ENCODE measurements at regions of chr19 and their contacts with region 1.

Region 1: GRCh38 chr19:11482384-11483050 is 1.7 kb upstream of the ELAVL3 start:
- DNase-seq: peak; percentile 80 to 89 (median 85)
- H3K4me3 ChIP-seq: peak overlapping the region; percentile 39
- H3K4me3 Mint-ChIP-seq: peak overlapping the region; percentile 38 to 79 (median 61)
- H3K27ac ChIP-seq: no peak overlapping the region
- H3K27ac Mint-ChIP-seq: peak overlapping the region in 4 of 8 donors; percentile 34 to 52 (median 48)
- H3K4me1 ChIP-seq: peaks cover 23% of the 10 kb centered on the region
- H3K4me1 Mint-ChIP-seq: peaks cover 19 to 26% (median 25%) of the 10 kb centered on the region in 3 donors
- H3K27me3 ChIP-seq: peaks cover 15% of the 10 kb centered on the region
- H3K27me3 Mint-ChIP-seq: peaks cover 26 to 28% of the 10 kb centered on the region in 2 donors

Region 2: DNA sequence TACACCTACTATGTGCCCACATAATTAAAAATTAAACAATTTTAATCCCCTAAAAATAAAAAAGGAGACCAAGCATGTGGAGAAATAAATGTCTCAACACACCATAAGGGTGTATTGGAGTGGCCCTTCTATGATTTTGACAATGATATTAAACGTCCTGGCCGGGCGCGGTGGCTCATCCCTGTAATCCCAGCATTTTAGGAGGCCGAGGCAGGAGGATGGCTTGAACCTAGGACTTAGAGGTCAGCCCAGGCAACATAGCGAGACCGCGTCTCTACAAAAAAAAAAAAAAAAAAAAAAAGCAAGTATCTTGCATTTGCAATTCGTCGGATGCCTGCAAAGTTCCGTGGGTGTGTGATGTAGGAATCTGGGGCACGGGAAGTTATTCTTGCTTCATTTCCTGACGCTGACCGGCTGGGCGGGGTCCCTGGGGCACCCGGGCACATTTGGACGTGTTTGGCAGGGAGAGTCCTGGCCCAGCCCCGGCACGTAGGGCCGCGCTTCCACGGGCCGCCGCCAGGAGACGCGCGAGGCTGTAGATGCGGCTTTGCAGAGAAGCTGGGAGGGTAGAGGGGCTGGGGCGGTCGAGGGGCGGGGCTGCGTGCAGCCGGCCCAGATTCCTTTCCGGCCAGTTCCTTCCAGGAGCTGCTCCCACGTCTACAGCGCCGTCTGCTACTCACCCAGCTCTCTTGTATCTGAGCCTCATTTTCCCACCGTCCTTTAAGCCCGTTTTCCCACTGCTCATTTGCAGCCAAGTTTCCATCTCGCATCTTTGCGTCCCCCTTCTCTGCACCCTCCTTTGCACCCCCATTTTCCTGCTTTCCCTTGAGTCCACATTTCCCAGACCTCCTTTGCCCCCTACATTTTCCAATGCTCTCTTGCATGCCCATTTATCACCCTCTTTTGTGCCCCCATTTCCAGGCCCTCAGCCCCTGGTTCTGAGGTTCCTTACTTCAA is 188.8 kb before region 1 on chr19:
- CTCF ChIA-PET with region 1: interaction called, 10 read pairs
- POLR2A ChIA-PET with region 1: no interaction called
- DNase-seq: peak; percentile 66 to 77 (median 70)
- H3K4me3 ChIP-seq: no peak overlapping the region
- H3K4me3 Mint-ChIP-seq: peak overlapping the region in 3 of 7 donors; percentile 1 to 24 (median 19)
- H3K27ac ChIP-seq: no peak overlapping the region
- H3K27ac Mint-ChIP-seq: peak overlapping the region in 1 of 8 donors; percentile 36
- H3K4me1 ChIP-seq: peaks cover 9% of the 10 kb centered on the region
- H3K4me1 Mint-ChIP-seq: peaks cover 3 to 8% (median 7%) of the 10 kb centered on the region in 3 donors
- H3K27me3 ChIP-seq: peaks cover 9% of the 10 kb centered on the region
- H3K27me3 Mint-ChIP-seq: peaks cover 7 to 29% of the 10 kb centered on the region in 2 donors

Region 3: GRCh38 chr19:11374433-11375142 is 107.9 kb before region 1 on chr19 and contains the start of gene SWSAP1:
- CTCF ChIA-PET with region 1: interaction called, 22 read pairs
- POLR2A ChIA-PET with region 1: interaction called, 3 read pairs
- DNase-seq: peak; percentile 94 to 99 (median 98)
- H3K4me3 ChIP-seq: peak within 1 kb of the TSS; percentile 57
- H3K4me3 Mint-ChIP-seq: peak within 1 kb of the TSS in 1 of 7 donors; percentile 37
- H3K27ac ChIP-seq: peak within 1 kb of the TSS; percentile 88
- H3K27ac Mint-ChIP-seq: peak within 1 kb of the TSS in 1 of 8 donors; percentile 70
- H3K4me1 ChIP-seq: peaks cover 33% of the 10 kb centered on the region
- H3K4me1 Mint-ChIP-seq: peaks cover 13 to 21% (median 15%) of the 10 kb centered on the region in 3 donors
- H3K27me3 ChIP-seq: no peaks in the 10 kb centered on the region
- H3K27me3 Mint-ChIP-seq: no peaks in the 10 kb centered on the region
- total RNA-seq, gene SWSAP1: 2.1 to 2.2 TPM

Region 4: DNA sequence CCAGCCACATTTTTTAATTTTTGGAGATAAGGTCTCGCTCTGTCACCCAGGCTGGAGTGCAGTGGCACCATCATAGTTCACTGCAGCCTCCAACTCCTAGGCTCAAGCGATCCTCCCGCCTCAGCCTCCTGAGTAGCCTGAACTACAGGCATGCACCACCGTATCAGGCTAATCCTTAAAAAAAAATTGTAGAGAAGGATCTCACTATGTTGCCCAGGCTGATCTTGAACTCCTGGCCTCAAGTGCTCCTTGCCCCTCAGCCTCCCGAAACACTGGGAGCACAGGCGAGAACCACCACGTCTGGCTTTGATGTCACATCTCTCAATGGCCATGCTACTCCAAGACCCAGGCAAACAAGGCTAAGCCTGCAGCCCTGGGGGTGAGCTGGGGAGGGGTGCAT is 25.9 kb before region 1 on chr19:
- CTCF ChIA-PET with region 1: interaction called, 10 read pairs
- POLR2A ChIA-PET with region 1: no interaction called
- DNase-seq: no peak
- H3K4me3 ChIP-seq: no peak overlapping the region
- H3K4me3 Mint-ChIP-seq: no peak overlapping the region
- H3K27ac ChIP-seq: no peak overlapping the region
- H3K27ac Mint-ChIP-seq: no peak overlapping the region
- H3K4me1 ChIP-seq: no peaks in the 10 kb centered on the region
- H3K4me1 Mint-ChIP-seq: no peaks in the 10 kb centered on the region
- H3K27me3 ChIP-seq: no peaks in the 10 kb centered on the region
- H3K27me3 Mint-ChIP-seq: peaks cover 6 to 18% of the 10 kb centered on the region in 2 donors

Region 5: GRCh38 chr19:11496391-11497163 is 14.1 kb after region 1 on chr19:
- CTCF ChIA-PET with region 1: interaction called, 10 read pairs
- POLR2A ChIA-PET with region 1: no interaction called
- DNase-seq: peak; percentile 39 to 69 (median 44)
- H3K4me3 ChIP-seq: no peak overlapping the region
- H3K4me3 Mint-ChIP-seq: no peak overlapping the region
- H3K27ac ChIP-seq: no peak overlapping the region
- H3K27ac Mint-ChIP-seq: peak overlapping the region in 1 of 8 donors; percentile 44
- H3K4me1 ChIP-seq: no peaks in the 10 kb centered on the region
- H3K4me1 Mint-ChIP-seq: peaks cover 4 to 6% (median 5%) of the 10 kb centered on the region in 3 donors
- H3K27me3 ChIP-seq: no peaks in the 10 kb centered on the region
- H3K27me3 Mint-ChIP-seq: no peaks in the 10 kb centered on the region